HepG2 (cell line): ENCODE measurements at regions of chr9 and their contacts with region 1.

Region 1: GRCh38 chr9:135085830-135086546 is 1.5 kb upstream of the OLFM1 start:
- DNase-seq: peak; percentile 96
- ATAC-seq: peak; percentile 95
- H3K4me3 ChIP-seq: no peak overlapping the region; a peak in 1 of 6 replicates
- H3K27ac ChIP-seq: no peak overlapping the region
- H3K4me1 ChIP-seq: peaks cover 29% of the 10 kb centered on the region
- H3K27me3 ChIP-seq: peaks cover 6 to 74% of the 10 kb centered on the region in 2 experiments
- CTCF ChIP-seq: peak; percentile 97
- EP300 ChIP-seq: 0 out of 4 replicates have a peak, but pooled peaks of 1 of the 2 experiments have one; percentile 44
- POLR2A ChIP-seq: no peak
- RAD21 ChIP-seq: peak; percentile 96

Region 2: GRCh38 chr9:135343837-135344522 is 258.0 kb after region 1 on chr9:
- CTCF ChIA-PET with region 1: interaction called, 38 read pairs
- POLR2A ChIA-PET with region 1: no interaction called
- in situ Hi-C with region 1: loop called (anchors 5 kb)
- intact Hi-C with region 1: no loop called
- DNase-seq: peak; percentile 16
- ATAC-seq: peak; percentile 83
- H3K4me3 ChIP-seq: no peak overlapping the region
- H3K27ac ChIP-seq: no peak overlapping the region
- H3K4me1 ChIP-seq: no peaks in the 10 kb centered on the region
- H3K27me3 ChIP-seq: peaks cover 16 to 81% of the 10 kb centered on the region in 2 experiments
- CTCF ChIP-seq: peak; percentile 94
- EP300 ChIP-seq: no peak
- POLR2A ChIP-seq: no peak
- RAD21 ChIP-seq: peak; percentile 76

Region 3: DNA sequence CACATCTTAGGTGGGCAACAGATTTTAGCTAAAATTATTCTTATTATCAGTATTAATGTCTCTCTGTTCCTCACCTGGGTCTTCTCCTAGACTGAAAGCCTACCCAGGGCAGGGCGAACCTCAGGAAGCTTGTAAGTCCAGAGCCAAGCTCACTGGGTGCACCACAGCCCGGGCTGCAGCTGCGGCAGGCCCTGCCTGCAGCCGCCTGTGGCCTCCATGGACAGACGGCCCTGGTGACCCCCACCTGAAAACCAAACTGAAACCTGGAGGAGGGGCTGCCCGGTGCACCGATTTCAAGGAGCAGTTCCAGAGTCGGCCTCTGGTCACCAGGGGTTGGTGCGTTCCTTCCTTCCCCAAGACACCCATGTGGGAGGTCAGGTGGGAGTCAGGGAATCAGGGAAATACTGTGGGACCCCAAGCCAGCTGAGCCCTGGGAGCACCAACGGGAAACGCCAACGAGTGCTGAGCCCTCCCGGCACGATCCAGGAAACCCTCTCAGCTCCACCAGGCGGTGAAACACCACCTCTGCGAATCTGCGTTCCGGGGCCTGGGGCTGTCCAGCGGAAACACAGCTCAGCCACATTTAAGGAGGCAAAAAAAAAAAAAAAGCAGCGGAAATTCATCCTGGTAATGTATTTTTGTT is 325.0 kb after region 1 on chr9:
- CTCF ChIA-PET with region 1: interaction called, 62 read pairs
- POLR2A ChIA-PET with region 1: no interaction called
- in situ Hi-C with region 1: loop called (anchors 5 kb)
- intact Hi-C with region 1: loop called (anchors 2 kb)
- DNase-seq: peak; percentile 7
- ATAC-seq: peak; percentile 65
- H3K4me3 ChIP-seq: no peak overlapping the region
- H3K27ac ChIP-seq: no peak overlapping the region
- H3K4me1 ChIP-seq: no peaks in the 10 kb centered on the region
- H3K27me3 ChIP-seq: peaks cover 5 to 53% of the 10 kb centered on the region in 2 experiments
- CTCF ChIP-seq: peak; percentile 42
- EP300 ChIP-seq: no peak
- POLR2A ChIP-seq: no peak
- RAD21 ChIP-seq: no peak